ENCODE measurements at regions of chr14 and their contacts with region 1.

Region 1: GRCh38 chr14:38721822-38722431 is 381.1 kb downstream of the SEC23A start:
- DNase-seq: peak in 2 of 3 donors; percentile 30 to 62
- ATAC-seq: peak; percentile 95 to 99 (median 98)
- H3K4me3 ChIP-seq: no peak overlapping the region
- H3K27ac ChIP-seq: no peak overlapping the region
- H3K4me1 ChIP-seq: no peaks in the 10 kb centered on the region
- H3K27me3 ChIP-seq: no peaks in the 10 kb centered on the region
- CTCF ChIP-seq: peak; percentile 71 to 84 (median 83)
- POLR2A ChIP-seq: no peak

Region 2: GRCh38 chr14:38623661-38624060 is 98.3 kb before region 1 on chr14:
- intact Hi-C with region 1: no loop called
- DNase-seq: no peak
- ATAC-seq: no peak
- H3K4me3 ChIP-seq: no peak overlapping the region
- H3K27ac ChIP-seq: no peak overlapping the region
- H3K4me1 ChIP-seq: no peaks in the 10 kb centered on the region
- H3K27me3 ChIP-seq: no peaks in the 10 kb centered on the region
- CTCF ChIP-seq: no peak
- POLR2A ChIP-seq: no peak

Region 3: DNA sequence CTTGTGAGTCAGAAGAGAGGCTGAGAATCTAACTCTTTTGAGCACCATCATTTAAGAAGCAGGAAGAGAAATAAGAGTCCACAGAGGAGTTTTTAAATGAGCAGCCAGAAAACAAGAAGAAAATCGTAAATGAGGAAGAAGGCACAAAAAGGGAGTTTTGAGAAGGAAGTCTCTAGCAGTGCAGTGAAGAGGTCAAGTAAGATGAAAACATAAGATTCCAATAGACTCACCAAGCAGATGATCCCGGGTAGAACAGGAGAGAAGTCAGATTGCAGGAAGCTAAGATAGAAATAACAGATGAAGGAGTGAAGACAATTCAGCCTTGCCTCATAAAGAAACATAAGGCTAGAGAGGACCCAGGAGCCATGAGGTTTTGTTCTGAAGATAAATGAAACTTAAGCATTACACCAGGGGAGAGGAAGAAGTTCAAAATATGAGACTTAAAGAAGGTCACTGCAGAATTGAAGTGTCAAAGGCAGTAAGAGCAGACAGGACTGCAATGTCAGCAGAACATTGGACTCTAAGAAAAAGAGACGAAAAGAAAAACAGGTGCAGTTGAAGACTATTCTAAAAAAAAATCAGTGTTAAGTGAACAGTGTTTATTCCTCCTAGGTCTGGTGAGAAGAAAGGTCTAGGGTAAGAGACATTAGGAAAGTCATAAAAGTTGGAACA is 152.2 kb after region 1 on chr14:
- intact Hi-C with region 1: loop called in 1 of 2 experiments (anchors 10 kb)
- DNase-seq: no peak
- ATAC-seq: peak in 3 of 4 donors; percentile 19 to 71 (median 47)
- H3K4me3 ChIP-seq: no peak overlapping the region
- H3K27ac ChIP-seq: no peak overlapping the region
- H3K4me1 ChIP-seq: peaks cover 0 to 5% (median 2%) of the 10 kb centered on the region in 4 donors
- H3K27me3 ChIP-seq: no peaks in the 10 kb centered on the region
- CTCF ChIP-seq: no peak
- POLR2A ChIP-seq: no peak

Measured in right lobe of liver (tissue), 6 donors.